PC-9 (cell line): ENCODE measurements at regions of chr6 and their contacts with region 1.

Region 1: DNA sequence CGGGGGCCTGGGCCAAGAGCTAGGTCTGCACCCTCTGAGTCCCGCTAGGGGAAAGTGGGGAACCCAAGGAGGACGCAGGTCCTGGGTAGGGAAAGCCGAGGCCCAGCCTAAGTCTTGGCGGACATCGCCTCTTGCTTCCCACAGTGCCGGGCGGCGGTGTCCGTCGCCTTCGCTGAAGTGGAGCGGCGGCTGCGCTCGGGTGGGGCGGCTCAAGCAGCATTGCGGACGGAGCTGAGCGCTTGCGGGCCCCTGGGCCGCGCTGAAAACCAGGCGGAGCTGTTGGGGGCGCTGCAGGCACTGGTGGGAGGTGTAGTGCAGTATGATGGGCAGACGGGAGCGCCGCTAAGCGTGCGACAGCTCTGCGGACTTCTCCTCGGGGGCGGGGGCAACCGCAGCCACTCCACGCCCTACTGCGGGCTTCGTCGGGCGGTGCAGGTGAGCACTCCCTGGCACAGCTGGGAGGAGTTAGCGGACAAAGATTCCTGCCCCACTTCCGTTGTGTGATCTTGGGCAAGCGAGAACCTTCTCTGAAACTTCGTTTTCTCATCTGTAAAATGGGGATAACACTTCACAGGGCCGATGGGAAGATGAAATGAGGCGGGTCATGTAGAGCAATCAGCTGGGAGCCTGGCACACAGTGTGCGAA is 4.2 kb downstream of the PRSS16 start:
- DNase-seq: peak; percentile 86 to 93
- H3K4me3 ChIP-seq: peak overlapping the region; percentile 84
- H3K27ac ChIP-seq: peak overlapping the region; percentile 65
- H3K4me1 ChIP-seq: peaks cover 11% of the 10 kb centered on the region
- H3K27me3 ChIP-seq: no peaks in the 10 kb centered on the region
- CTCF ChIP-seq: peak; percentile 69; the same call in 1 of the 2 replicates

Region 2: DNA sequence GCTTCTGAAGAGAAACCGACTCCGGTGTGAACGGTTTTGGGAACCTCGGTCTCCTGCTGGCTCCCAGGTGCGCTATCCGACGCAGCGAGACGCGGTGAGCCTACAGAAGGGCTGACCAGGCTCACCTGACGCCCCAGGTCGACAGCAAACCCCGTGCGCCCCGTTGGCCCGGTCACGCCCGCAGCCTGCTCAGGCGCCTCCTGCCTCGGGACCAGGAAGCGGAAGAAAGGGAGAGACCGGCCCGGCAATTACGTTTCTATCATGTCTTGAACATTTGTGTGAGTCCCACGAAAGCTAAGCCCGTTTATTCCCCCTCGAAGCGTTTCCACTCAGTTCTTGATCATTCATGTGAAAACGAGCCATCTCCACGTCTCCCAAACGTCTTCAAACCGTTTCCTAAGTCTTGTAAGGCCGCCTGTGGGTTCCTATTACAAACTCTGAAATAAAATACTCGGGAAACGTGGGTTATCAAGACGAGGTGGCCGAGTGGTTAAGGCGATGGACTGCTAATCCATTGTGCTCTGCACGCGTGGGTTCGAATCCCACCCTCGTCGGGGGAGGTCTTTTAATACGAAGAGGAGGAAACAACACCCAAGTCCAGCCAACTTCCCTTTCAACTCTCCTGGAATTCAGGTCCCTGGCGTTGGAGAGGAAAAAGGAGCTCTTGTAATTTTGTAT is 154.8 kb before region 1 on chr6:
- CTCF ChIA-PET with region 1: no interaction called
- POLR2A ChIA-PET with region 1: no interaction called
- intact Hi-C with region 1: no loop called
- DNase-seq: peak; percentile 38 to 70
- H3K4me3 ChIP-seq: peak overlapping the region; percentile 52; the same call in 1 of the 2 replicates
- H3K27ac ChIP-seq: no peak overlapping the region
- H3K4me1 ChIP-seq: peaks cover 5% of the 10 kb centered on the region
- H3K27me3 ChIP-seq: no peaks in the 10 kb centered on the region
- CTCF ChIP-seq: no peak

Region 3: GRCh38 chr6:27273783-27274182 is 22.1 kb after region 1 on chr6:
- CTCF ChIA-PET with region 1: interaction called, 3 read pairs
- POLR2A ChIA-PET with region 1: interaction called, 25 read pairs
- intact Hi-C with region 1: no loop called
- DNase-seq: no peak
- H3K4me3 ChIP-seq: no peak overlapping the region
- H3K27ac ChIP-seq: no peak overlapping the region
- H3K4me1 ChIP-seq: 0 out of 2 replicates have a peak, but pooled peaks cover 5% of the 10 kb centered on the region
- H3K27me3 ChIP-seq: no peaks in the 10 kb centered on the region
- CTCF ChIP-seq: no peak